Activated naive CD4-positive, alpha-beta T cell treated with anti-CD3 and anti-CD28 coated beads for 36 hours (primary cell): ENCODE measurements at regions of chr1 and their contacts with region 1.

Region 1: DNA sequence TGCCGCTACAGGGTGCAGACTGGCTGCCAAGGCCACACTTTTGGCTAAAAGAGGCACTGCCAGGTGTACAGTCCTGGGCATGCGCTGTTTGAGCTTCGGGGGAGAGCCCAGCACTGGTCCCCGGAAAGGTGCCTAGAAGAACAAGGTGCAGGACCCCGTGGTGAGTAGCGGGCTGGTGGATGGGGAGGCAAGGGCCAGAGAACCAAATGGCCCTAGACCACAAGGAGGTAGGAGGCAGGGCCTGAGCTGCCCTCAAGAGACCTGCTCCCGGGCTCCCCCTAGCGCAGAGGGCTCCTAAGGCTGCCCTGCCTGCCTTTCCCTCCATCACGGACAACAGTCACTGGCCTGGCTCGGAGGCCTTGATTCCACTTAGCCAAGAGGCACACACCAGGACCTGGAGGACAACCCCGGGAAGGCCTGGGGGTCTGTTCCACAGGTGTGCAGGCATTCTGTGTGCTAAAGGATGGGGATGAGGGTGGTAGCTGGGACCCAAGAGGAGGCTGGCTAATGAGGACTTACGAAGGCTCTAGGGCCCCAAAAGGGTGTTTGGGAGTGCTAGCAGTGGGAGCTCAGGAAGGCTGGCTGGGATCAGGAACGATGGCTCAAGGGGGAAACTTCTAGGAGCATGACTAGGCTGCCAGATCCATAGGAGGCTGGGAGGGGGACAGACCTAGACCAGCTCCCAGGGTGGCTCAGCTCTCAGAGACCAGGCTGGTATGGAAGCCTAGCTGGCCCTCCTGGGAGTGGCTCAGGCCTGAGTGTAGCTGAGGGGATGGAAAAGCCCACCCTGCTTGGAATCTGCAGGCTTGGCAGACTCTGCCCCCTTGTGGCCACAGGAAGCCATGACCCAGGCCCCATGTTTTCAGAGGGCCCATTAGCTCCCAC is 742 bp downstream of the ARTN start:
- DNase-seq: peak; percentile 72
- H3K4me3 Mint-ChIP-seq: peak overlapping the region; percentile 36
- H3K27ac Mint-ChIP-seq: no peak overlapping the region
- H3K4me1 Mint-ChIP-seq: peaks cover 14% of the 10 kb centered on the region
- H3K27me3 Mint-ChIP-seq: peaks cover 34% of the 10 kb centered on the region

Region 2: GRCh38 chr1:43227143-43227764 is 707.1 kb before region 1 on chr1:
- CTCF ChIA-PET with region 1: interaction called, 4 read pairs
- intact Hi-C with region 1: loop called (anchors 10 kb)
- DNase-seq: peak; percentile 93
- H3K4me3 Mint-ChIP-seq: no peak overlapping the region
- H3K27ac Mint-ChIP-seq: no peak overlapping the region
- H3K4me1 Mint-ChIP-seq: no peaks in the 10 kb centered on the region
- H3K27me3 Mint-ChIP-seq: peaks cover 2% of the 10 kb centered on the region

Region 3: DNA sequence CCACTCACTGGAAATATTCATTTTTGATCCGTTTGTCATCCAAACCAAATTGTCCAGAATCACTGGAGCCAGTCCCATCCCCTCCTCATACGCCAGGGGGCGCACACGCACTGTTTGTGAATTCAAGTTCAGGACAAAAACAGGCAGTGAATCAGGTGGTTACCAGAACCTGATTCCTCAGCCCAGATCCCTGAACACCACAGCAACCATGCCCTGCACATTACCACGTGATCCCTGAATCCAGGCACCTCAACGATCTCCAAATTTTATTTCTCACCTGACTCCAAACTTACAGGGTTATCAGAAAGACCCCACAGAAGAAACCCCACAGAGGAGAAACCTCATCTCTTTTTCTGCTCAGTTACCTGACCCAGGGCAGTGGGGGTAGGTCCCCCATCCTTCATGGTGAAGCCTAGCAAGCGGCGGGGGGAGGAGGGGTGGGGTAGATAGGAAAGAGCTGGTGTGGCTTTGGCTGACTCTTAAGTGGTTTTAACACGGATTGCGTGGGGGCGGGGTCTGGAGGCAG is 405.1 kb before region 1 on chr1:
- CTCF ChIA-PET with region 1: interaction called, 14 read pairs
- intact Hi-C with region 1: loop called (anchors 1 kb)
- DNase-seq: peak; percentile 91
- H3K4me3 Mint-ChIP-seq: no peak overlapping the region
- H3K27ac Mint-ChIP-seq: no peak overlapping the region
- H3K4me1 Mint-ChIP-seq: peaks cover 17% of the 10 kb centered on the region
- H3K27me3 Mint-ChIP-seq: peaks cover 36% of the 10 kb centered on the region

Region 4: GRCh38 chr1:43763497-43763973 is 170.8 kb before region 1 on chr1:
- CTCF ChIA-PET with region 1: interaction called, 246 read pairs
- intact Hi-C with region 1: loop called (anchors 1 kb)
- DNase-seq: peak; percentile 68
- H3K4me3 Mint-ChIP-seq: no peak overlapping the region
- H3K27ac Mint-ChIP-seq: no peak overlapping the region
- H3K4me1 Mint-ChIP-seq: no peaks in the 10 kb centered on the region
- H3K27me3 Mint-ChIP-seq: no peaks in the 10 kb centered on the region

Region 5: GRCh38 chr1:43946236-43947060 is 12.1 kb after region 1 on chr1 and contains the start of gene IPO13:
- CTCF ChIA-PET with region 1: interaction called, 76 read pairs
- intact Hi-C with region 1: loop called (anchors 1 kb)
- DNase-seq: peak; percentile 97
- H3K4me3 Mint-ChIP-seq: peak within 1 kb of the TSS; percentile 90
- H3K27ac Mint-ChIP-seq: peak within 1 kb of the TSS; percentile 88
- H3K4me1 Mint-ChIP-seq: peaks cover 39% of the 10 kb centered on the region
- H3K27me3 Mint-ChIP-seq: no peaks in the 10 kb centered on the region
- total RNA-seq, gene IPO13: 8.0 to 12.4 TPM

Region 6: GRCh38 chr1:44048816-44049215 is 114.5 kb after region 1 on chr1:
- CTCF ChIA-PET with region 1: interaction called, 11 read pairs
- intact Hi-C with region 1: loop called (anchors 1 kb)
- DNase-seq: no peak
- H3K4me3 Mint-ChIP-seq: no peak overlapping the region
- H3K27ac Mint-ChIP-seq: peak overlapping the region; percentile 47
- H3K4me1 Mint-ChIP-seq: peaks cover 21% of the 10 kb centered on the region
- H3K27me3 Mint-ChIP-seq: peaks cover 11% of the 10 kb centered on the region